ENCODE measurements at regions of chr6 and their contacts with region 1.

Region 1: DNA sequence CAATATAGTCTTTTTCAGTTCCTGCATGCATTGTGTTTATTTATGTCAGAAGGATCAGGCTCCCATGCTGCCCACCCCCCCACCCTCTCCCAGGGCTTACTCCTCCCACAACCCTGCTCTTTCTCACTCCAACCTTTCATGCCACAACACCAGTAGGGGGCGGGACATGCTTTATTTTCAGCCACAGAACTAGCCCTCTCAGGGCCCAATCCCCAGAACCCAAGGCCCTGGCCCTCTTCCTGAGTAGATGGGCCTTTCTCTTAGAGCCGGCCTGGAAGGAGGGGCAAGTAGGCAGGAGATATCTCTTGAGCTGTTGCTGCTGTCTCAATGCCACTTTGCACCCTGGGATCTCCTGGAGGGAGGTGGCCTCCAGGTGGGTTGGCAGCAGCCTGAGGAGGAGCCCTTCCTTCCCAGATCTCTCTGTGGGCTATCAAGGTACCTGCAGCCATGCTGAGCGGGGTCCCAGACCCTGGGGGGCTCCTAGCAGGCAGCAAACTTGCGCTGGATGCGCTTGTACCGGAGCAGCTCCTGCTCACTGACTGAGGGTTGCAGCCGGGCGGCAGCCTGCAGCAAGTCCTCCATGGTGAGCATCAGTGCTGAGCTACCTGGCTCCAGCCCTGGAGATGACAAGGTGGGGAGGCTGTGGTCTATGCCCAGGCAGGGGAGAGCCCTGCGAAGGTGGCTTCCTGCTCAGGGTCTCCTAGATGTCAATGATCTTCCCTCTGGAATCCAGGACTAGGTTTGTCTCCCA is 3.5 kb downstream of the GNMT start:
- DNase-seq: peak; percentile 64 to 82
- H3K4me3 ChIP-seq: no peak overlapping the region
- H3K27ac ChIP-seq: no peak overlapping the region
- H3K4me1 ChIP-seq: peaks cover 0 to 10% (median 6%) of the 10 kb centered on the region in 4 experiments; a peak in 5 of 7 replicates
- H3K27me3 ChIP-seq: peaks cover 0 to 13% (median 10%) of the 10 kb centered on the region in 4 experiments; a peak in 5 of 7 replicates
- CTCF ChIP-seq: peak in 2 of 3 experiments; percentile 50 to 63; a peak in 3 of 4 replicates
- EP300 ChIP-seq: no peak
- POLR2A ChIP-seq: no peak
- RAD21 ChIP-seq: peak; percentile 69 to 79

Region 2: DNA sequence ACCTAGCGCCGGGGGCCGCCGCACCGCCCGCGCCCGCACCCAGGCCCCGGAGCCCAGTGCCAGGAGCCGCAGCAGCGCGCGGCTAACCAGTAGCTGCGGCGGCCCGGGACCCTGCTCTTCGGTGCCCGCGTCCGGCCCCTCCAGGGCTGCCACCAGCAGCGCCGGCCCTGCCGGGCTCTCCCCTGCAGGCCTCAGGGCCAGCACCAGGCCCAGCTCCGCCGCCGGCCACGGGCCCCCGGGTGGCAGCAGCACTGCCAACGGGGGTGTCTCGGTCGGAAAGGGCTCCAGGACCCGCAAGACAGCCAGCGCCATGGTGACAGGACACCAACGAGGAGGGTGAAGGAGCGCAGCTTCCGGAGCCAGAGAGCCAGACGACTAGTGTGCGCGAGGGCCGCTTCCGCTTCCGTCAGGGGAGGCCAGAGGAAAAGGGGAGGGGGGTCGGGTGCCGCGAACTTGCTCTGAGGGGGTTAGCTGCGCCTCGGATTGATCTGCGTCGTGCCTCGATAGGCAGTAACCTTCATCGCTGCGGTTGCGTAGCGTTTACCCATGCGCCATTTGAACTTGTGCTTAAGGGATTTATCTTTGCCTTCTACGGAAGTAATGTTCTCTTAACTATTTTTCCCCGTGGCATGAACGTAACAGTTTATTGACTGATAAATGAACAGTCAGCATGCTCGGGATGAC is 15.0 kb after region 1 on chr6 and contains the start of gene PEX6:
- CTCF ChIA-PET with region 1: interaction called, 33 read pairs
- POLR2A ChIA-PET with region 1: interaction called, 27 read pairs
- DNase-seq: peak; percentile 76 to 89
- H3K4me3 ChIP-seq: peak within 1 kb of the TSS; percentile 67 to 92 (median 70)
- H3K27ac ChIP-seq: no peak within 1 kb of the TSS
- H3K4me1 ChIP-seq: peaks cover 4 to 10% (median 6%) of the 10 kb centered on the region in 4 experiments; a peak in 3 of 7 replicates
- H3K27me3 ChIP-seq: no peaks in the 10 kb centered on the region
- CTCF ChIP-seq: no peak; a peak in 1 of 4 replicates
- EP300 ChIP-seq: no peak
- POLR2A ChIP-seq: peak; percentile 68 to 69; a peak in 2 of 3 replicates
- RAD21 ChIP-seq: no peak
- total RNA-seq, gene PEX6: 11.7 and 12.5 TPM in 2 replicates

Region 3: DNA sequence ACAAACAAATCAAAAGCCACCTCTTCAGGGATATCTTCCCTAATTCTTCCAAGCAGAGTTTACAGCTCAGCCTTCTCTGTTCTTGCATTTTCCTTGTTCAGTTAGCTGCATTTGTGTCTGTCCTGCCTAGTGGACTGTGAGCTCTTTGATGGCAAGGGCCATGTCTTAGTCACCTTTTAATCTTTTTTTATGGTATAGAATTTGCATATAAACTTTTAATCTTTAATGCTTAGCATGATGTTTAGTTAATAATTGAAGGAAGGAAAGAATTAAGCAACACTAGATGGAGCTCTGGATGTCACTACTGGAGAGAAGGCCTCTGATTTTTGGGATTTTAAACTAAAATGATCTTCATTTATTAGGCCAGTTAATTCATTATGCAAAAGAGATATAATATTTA is 32.5 kb after region 1 on chr6:
- CTCF ChIA-PET with region 1: interaction called, 30 read pairs
- POLR2A ChIA-PET with region 1: interaction called, 3 read pairs
- DNase-seq: no peak
- H3K4me3 ChIP-seq: no peak overlapping the region
- H3K27ac ChIP-seq: no peak overlapping the region
- H3K4me1 ChIP-seq: no peaks in the 10 kb centered on the region; a peak in 1 of 7 replicates
- H3K27me3 ChIP-seq: no peaks in the 10 kb centered on the region
- CTCF ChIP-seq: no peak
- EP300 ChIP-seq: no peak
- POLR2A ChIP-seq: no peak
- RAD21 ChIP-seq: no peak

Measured in H1 (cell line).